ENCODE measurements at regions of chr16 and their contacts with region 1.

Region 1: GRCh38 chr16:25111403-25112166 is at the start of gene LCMT1:
- DNase-seq: peak; percentile 91 to 95
- ATAC-seq: peak; percentile 78
- total RNA-seq, gene LCMT1: 43.8 to 55.8 TPM

Region 2: GRCh38 chr16:24717411-24717810 is 394.2 kb before region 1 on chr16:
- intact Hi-C with region 1: no loop called
- DNase-seq: no peak
- ATAC-seq: no peak

Region 3: DNA sequence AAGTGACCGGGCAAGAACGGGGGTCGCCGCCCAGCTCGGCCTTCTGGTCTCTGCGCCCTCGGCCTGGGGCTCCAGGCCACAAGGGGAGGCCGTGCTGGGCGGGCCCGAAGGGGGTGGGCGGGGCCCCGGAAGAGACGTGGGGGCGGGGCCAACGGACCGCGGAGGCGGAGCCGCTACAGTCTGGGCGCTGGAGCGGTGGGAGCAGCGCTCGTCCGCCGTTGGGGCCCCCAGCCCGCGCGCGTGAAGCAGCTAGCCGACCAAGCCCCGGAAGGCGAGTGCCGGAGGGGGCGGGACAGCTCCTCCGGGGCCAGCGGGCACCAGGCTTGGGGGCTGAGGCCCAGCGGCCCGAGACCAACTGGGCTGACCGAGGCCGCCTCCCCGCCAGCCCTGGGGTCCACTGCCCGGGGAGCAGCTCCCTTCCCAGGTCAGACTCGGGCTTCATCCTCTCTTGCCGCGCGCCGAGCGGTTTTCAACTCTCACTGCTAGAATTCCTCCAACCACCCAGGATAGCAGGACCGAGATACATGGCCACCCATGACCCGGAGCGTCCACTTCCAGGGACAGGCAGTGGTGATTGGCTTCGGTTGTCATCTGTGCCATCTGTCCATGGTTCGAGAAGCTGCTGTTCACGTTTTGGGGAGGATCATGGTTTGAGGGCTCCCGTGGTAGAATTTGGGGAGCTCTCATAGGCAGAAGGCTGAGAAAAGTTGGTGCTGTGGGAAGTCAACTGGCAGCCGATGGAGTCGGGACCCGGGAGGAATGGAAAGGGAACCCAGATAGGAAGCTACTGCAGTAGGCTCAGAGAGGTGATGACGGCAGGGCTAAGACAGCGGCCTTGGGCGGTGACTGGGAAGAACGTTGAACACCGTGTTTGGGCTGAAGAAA is 44.6 kb before region 1 on chr16:
- intact Hi-C with region 1: loop called in 1 of 2 experiments (anchors 10 kb)
- DNase-seq: peak; percentile 73 to 94
- ATAC-seq: peak; percentile 99

Measured in left colon (tissue), 2 donors.